K562 (cell line): ENCODE measurements at regions of chrX and their contacts with region 1.

Region 1: DNA sequence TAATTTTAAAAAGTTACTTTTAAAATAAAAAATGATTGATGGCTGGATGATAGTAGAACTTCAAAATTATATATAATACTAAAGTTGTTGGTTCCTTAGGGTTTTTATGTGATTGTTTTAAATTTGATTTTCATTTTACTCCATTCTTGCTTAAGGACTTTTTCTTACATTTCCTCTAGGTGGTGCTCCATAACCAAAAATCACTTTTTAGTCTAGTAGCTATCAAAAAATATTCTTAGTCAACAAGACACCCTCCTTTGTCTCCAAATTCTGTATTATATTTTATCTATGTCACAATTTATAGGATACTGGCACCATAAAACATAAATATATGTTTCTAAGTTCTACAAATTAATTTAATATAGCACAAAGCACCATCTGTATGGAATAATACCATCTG is 67.2 kb upstream of the BRWD3 start:
- DNase-seq: peak in 2 of 4 experiments; percentile 6 to 33
- ATAC-seq: no peak
- H3K4me3 ChIP-seq: no peak overlapping the region
- H3K27ac ChIP-seq: no peak overlapping the region
- H3K4me1 ChIP-seq: no peaks in the 10 kb centered on the region
- H3K27me3 ChIP-seq: no peaks in the 10 kb centered on the region
- CTCF ChIP-seq: peak in 1 of 3 experiments; percentile 49; a peak in 3 of 6 replicates
- EP300 ChIP-seq: no peak
- POLR2A ChIP-seq: no peak
- RAD21 ChIP-seq: peak; percentile 34 to 54; a peak in 3 of 4 replicates

Region 2: DNA sequence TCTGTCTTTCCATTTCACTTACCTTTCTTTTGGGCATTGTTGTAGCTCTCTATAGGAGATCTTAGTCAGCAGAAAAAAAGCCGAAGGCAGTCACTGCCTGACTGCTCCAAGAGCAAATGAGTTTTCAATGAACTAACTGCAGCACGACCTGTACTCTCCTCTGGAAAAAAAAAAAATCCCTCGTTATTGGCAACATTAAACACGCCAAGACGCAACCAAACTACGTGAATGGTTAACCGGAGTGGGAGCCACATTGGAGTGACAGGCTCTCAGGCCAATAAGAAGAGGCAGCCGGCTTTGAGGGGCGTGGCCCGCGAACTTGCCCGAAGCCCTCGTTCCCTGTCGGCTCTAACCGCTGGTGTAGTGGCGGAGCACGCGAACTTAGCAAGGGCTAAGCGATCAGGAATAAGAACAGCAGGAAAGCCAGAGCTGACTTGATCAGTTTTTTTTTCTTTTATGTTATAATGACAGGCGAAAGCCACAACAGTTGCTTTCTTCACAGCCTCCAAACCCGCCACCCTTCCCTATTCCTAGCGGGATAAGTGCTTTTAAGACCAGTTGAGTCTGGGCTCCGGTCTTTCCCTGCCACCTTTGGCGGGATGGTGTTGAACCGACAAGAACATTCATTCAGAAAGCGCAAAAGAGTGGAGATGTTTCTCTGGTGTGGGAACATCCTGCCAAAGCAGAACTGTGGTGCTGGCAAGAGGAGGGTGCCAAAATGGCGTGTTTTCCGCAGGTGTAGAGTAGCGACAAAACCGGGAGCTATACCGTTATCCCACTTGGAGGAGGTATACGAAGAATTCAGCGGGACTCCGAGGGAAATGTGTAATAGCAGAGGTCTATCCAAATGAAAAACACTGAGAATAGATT is 244.9 kb after region 1 on chrX:
- CTCF ChIA-PET with region 1: no interaction called
- POLR2A ChIA-PET with region 1: no interaction called
- in situ Hi-C with region 1: no loop called
- intact Hi-C with region 1: loop called (anchors 5 kb)
- DNase-seq: peak; percentile 86 to 89 (median 87)
- ATAC-seq: peak; percentile 97
- H3K4me3 ChIP-seq: peak overlapping the region; percentile 46
- H3K27ac ChIP-seq: peak overlapping the region; percentile 73
- H3K4me1 ChIP-seq: no peaks in the 10 kb centered on the region
- H3K27me3 ChIP-seq: no peaks in the 10 kb centered on the region
- CTCF ChIP-seq: no peak
- EP300 ChIP-seq: no peak
- POLR2A ChIP-seq: peak; percentile 69
- RAD21 ChIP-seq: no peak

Region 3: DNA sequence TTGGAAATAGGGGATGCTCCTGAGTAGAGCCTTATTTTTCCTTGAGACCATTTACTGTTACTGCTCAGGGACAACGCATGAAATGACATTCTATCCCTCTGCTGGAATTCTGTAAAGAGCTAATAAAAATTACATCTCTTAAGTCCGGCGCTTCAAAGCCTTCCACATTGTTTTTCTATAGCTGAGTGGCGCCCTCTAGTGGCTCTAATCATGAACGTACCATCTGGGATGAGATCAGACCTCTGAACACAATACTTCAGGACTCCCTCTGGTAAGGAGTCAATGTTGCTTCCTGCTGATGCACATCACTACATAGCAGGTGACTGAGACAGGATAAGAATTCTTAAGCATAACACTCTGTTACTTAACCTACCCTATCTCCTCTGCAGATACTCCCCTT is 318.8 kb after region 1 on chrX:
- CTCF ChIA-PET with region 1: no interaction called
- POLR2A ChIA-PET with region 1: no interaction called
- in situ Hi-C with region 1: no loop called
- intact Hi-C with region 1: loop called (anchors 5 kb)
- DNase-seq: peak; percentile 25 to 63 (median 50)
- ATAC-seq: peak; percentile 86
- H3K4me3 ChIP-seq: no peak overlapping the region
- H3K27ac ChIP-seq: no peak overlapping the region
- H3K4me1 ChIP-seq: no peaks in the 10 kb centered on the region
- H3K27me3 ChIP-seq: no peaks in the 10 kb centered on the region
- CTCF ChIP-seq: peak; percentile 35 to 51 (median 46); a peak in 3 of 6 replicates
- EP300 ChIP-seq: no peak
- POLR2A ChIP-seq: no peak
- RAD21 ChIP-seq: peak in 1 of 2 experiments; percentile 45; a peak in 2 of 4 replicates

Region 4: DNA sequence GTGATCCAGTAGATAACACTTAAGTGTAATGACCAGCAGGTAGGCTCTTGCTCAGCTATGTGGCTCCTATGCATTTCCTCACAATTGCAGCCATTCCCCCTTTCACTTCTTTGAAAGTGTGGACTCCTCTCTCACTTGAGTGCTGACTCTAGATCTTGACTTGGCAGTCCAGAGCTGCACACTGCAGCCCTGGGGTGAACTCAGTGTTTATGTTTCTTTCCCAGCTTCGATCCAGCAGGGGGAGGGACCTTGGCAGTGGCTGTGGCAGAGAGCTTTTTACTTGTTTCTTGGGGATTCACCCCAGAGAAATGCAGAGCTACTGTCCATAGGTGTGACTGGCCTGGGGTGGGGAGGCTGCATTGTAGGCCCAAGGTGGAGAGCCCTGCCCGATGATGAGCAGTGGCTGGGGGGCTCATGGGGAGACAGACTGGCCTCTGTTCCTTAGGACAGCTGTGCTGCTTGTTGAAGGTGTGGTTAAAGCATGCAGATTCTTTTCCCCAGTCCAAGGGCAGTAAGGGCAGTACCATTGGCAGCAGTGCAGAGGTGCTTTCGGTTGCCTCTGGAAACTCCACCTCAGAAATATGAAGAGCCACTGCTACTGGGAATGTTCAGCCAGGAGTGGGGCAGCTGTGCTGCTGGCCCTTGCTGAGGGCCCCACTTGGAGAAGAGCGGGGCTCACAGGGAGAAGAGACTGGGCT is 459.7 kb after region 1 on chrX:
- CTCF ChIA-PET with region 1: no interaction called
- POLR2A ChIA-PET with region 1: no interaction called
- in situ Hi-C with region 1: no loop called
- intact Hi-C with region 1: no loop called
- DNase-seq: no peak
- ATAC-seq: no peak
- H3K4me3 ChIP-seq: no peak overlapping the region
- H3K27ac ChIP-seq: no peak overlapping the region
- H3K4me1 ChIP-seq: no peaks in the 10 kb centered on the region
- H3K27me3 ChIP-seq: no peaks in the 10 kb centered on the region
- CTCF ChIP-seq: no peak
- EP300 ChIP-seq: no peak
- POLR2A ChIP-seq: no peak
- RAD21 ChIP-seq: no peak

Region 5: DNA sequence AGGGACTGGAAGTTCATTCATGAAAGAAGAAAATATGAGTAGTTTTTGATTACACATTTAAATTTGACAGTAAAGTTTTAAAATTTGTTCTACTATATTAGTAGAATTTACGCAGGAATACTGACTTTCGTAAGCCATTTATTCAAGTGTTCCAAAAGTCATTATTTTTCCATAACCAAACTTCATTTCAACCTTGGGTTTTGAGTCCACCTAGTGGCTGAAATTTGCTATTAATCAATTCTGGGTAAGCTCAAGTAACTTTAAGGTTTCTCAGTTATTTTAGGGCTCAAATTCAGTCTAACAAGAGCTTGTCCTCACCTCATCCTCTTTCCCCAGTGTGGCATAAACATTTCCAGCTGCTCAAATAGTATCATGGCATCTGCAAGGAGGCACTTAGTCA is 500.5 kb after region 1 on chrX:
- CTCF ChIA-PET with region 1: no interaction called
- POLR2A ChIA-PET with region 1: no interaction called
- in situ Hi-C with region 1: no loop called
- intact Hi-C with region 1: loop called (anchors 10 kb)
- DNase-seq: peak in 3 of 4 experiments; percentile 5 to 12 (median 7)
- ATAC-seq: no peak
- H3K4me3 ChIP-seq: no peak overlapping the region
- H3K27ac ChIP-seq: no peak overlapping the region
- H3K4me1 ChIP-seq: no peaks in the 10 kb centered on the region
- H3K27me3 ChIP-seq: no peaks in the 10 kb centered on the region
- CTCF ChIP-seq: peak; percentile 9 to 44 (median 21); a peak in 3 of 6 replicates
- EP300 ChIP-seq: no peak
- POLR2A ChIP-seq: no peak
- RAD21 ChIP-seq: peak; percentile 31 to 55; a peak in 3 of 4 replicates